ENCODE measurements at regions of chr3 and their contacts with region 1.

Region 1: GRCh38 chr3:158313338-158313927 is 203.5 kb downstream of the RSRC1 start:
- DNase-seq: no peak
- ATAC-seq: no peak
- H3K4me3 Mint-ChIP-seq: no peak overlapping the region
- H3K27ac Mint-ChIP-seq: no peak overlapping the region
- H3K4me1 Mint-ChIP-seq: no peaks in the 10 kb centered on the region
- H3K27me3 Mint-ChIP-seq: no peaks in the 10 kb centered on the region

Region 2: DNA sequence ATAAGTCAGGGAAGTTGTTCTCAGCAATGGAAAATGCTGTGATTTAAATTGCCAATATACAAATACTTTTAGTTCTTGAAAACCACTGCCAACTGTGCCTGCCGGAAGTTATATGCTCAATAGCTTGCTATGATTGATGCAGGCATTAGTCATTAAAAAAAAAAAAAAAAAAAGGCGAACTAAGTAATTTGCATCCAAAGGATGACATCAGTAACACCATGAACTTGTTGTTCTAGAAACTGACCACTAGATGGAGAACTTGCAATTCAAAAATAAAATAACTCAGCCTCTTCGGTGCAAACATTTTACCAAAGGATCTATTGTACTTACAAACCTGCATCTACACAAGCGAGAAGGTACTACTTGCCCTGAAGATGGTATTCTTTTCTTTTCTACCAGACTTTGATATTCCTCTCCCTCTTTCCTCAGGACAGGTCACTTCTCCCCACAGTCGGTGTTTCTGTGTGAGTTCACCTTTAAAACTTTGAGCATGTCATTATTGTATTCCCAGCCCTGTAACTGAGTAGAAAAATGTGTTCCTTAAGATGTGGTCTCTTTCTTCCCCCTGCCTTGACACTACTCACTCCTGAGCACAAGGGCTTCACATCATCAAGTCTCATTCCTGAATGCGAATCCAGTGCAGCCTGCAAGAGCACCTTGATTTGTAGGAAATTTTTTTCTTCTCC is 695.2 kb before region 1 on chr3:
- CTCF ChIA-PET with region 1: no interaction called
- POLR2A ChIA-PET with region 1: no interaction called
- intact Hi-C with region 1: loop called in 1 of 2 experiments (anchors 5 kb)
- DNase-seq: peak; percentile 49
- ATAC-seq: peak; percentile 95
- H3K4me3 Mint-ChIP-seq: no peak overlapping the region
- H3K27ac Mint-ChIP-seq: no peak overlapping the region
- H3K4me1 Mint-ChIP-seq: peaks cover 9% of the 10 kb centered on the region
- H3K27me3 Mint-ChIP-seq: peaks cover 8% of the 10 kb centered on the region

Region 3: GRCh38 chr3:157865352-157866000 is 448.0 kb before region 1 on chr3:
- CTCF ChIA-PET with region 1: interaction called, 3 read pairs
- POLR2A ChIA-PET with region 1: no interaction called
- intact Hi-C with region 1: loop called in 1 of 2 experiments (anchors 2 kb)
- DNase-seq: peak; percentile 73
- ATAC-seq: peak; percentile 65
- H3K4me3 Mint-ChIP-seq: no peak overlapping the region
- H3K27ac Mint-ChIP-seq: no peak overlapping the region
- H3K4me1 Mint-ChIP-seq: no peaks in the 10 kb centered on the region
- H3K27me3 Mint-ChIP-seq: no peaks in the 10 kb centered on the region

Measured in activated CD4-positive, alpha-beta T cell treated with anti-CD3 and anti-CD28 coated beads for 36 hours (primary cell).